Activated naive CD4-positive, alpha-beta T cell treated with anti-CD3 and anti-CD28 coated beads for 36 hours (primary cell): ENCODE measurements at regions of chr12 and their contacts with region 1.

Region 1: DNA sequence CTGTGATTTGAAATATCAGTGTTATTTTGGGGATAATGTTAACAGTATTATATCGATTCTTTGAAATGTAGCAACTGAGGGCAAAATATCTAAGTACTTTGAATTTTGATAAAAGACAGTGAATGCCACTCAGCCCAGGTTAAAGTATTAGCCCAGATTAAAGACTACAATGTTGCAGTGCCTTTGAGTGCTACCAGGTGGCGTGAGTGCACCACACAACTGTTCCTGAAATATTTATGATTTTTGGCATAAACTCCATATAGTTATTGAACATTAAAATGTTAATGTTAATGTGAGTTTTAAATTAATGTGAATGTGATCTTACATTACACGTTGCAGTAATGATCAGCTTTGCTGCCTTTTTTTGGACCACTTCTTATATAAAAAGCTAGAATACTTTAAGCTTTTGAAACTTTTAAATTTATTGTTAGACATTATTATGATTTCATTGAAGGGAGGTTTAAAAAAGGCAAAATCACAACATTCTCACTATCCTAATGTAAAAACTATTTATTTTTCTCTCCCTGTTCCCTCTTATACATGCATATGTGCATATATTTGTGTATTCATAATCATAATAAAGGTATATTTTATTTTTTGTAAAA is 22.5 kb downstream of the MRPS35 start:
- DNase-seq: peak; percentile 60
- H3K4me3 Mint-ChIP-seq: no peak overlapping the region
- H3K27ac Mint-ChIP-seq: no peak overlapping the region
- H3K4me1 Mint-ChIP-seq: no peaks in the 10 kb centered on the region
- H3K27me3 Mint-ChIP-seq: no peaks in the 10 kb centered on the region

Region 2: DNA sequence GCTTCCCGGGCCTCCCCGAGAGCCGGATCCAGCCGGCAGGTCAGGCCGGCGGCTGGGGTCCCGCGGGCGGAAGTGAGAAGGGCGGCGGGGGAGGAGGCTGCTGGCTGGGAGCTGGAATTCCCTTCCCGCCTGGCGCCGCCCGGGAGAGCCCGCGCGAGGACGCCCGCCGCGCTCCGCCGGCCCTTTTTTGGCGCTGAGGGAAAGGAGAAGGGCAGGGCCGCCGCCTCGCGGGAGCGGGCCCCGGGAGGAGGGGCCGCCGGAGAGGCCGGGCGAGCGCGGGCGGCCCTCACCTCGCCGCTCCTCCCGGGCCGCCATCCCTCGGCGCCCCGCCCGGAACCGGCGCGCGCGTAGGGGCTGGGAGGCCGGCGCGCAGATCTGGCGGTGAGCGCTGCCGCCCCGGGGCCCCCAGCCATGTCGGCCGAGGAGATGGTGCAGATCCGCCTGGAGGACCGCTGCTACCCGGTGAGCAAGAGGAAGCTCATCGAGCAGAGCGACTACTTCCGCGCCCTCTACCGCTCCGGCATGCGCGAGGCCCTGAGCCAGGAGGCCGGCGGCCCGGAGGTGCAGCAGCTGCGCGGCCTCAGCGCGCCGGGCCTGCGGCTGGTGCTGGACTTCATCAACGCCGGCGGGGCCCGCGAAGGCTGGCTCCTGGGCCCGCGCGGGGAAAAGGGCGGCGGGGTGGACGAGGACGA is 46.9 kb after region 1 on chr12 and contains the starts of genes KLHL42 and MANSC4:
- CTCF ChIA-PET with region 1: interaction called, 4 read pairs
- intact Hi-C with region 1: loop called (anchors 2 kb)
- DNase-seq: peak; percentile 71
- H3K4me3 Mint-ChIP-seq: peak within 1 kb of the TSS; percentile 82
- H3K27ac Mint-ChIP-seq: peak within 1 kb of the TSS; percentile 80
- H3K4me1 Mint-ChIP-seq: peaks cover 27% of the 10 kb centered on the region
- H3K27me3 Mint-ChIP-seq: no peaks in the 10 kb centered on the region
- total RNA-seq, gene KLHL42: 9.4 to 9.8 TPM
- total RNA-seq, gene MANSC4: not detected

Region 3: DNA sequence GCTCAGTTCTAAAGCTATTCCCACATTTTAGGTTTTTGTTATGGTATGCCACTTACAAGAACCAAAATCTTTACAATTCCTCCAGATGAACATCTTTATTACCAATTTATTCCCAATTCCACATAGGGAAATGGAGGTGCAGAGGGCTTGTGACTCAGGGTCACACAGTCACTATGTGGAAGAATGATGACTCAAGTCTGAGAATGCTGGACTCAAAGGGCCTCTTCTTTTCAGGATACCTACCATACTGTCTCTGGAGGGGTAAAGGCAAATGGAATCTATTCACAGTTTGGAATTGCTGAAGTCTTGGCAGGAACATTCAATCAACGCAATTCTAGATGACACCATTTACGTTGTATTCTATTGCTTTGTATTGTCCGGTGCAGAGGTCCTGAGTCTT is 95.0 kb after region 1 on chr12:
- CTCF ChIA-PET with region 1: no interaction called
- intact Hi-C with region 1: no loop called
- DNase-seq: no peak
- H3K4me3 Mint-ChIP-seq: no peak overlapping the region
- H3K27ac Mint-ChIP-seq: no peak overlapping the region
- H3K4me1 Mint-ChIP-seq: peaks cover 17% of the 10 kb centered on the region
- H3K27me3 Mint-ChIP-seq: peaks cover 35% of the 10 kb centered on the region

Region 4: DNA sequence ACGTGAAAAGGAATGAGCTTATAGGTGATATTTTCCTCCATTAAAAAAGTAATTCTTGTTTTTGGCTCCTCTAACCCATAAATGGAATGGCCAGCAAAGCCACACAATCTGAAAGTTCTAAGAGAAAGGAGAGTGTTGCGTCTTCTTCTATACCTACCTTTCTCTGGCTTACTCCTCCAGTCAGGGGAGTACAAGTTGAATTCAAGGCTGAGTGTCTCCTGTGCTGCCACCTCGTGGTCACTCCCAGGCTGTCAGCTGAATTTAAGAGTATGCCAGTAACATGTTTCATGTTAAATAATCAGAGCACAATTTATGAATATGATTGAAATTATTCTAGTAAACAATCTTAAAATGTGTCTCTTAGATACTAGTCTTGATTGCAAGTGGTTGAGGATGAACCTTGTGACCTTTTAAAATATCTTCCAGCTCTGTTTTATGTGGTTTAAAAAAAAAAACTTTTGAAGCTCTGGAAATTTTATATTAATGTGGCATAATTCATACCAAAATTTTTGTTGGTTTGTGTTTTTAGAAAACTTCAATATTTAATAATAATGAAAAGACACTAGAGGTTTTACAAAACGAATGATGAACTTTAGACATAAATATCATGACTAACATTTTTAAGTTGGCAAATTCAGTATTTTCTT is 207.7 kb after region 1 on chr12:
- CTCF ChIA-PET with region 1: interaction called, 37 read pairs
- intact Hi-C with region 1: loop called (anchors 1 kb)
- DNase-seq: peak; percentile 91
- H3K4me3 Mint-ChIP-seq: no peak overlapping the region
- H3K27ac Mint-ChIP-seq: no peak overlapping the region
- H3K4me1 Mint-ChIP-seq: no peaks in the 10 kb centered on the region
- H3K27me3 Mint-ChIP-seq: peaks cover 3% of the 10 kb centered on the region

Region 5: GRCh38 chr12:28872654-28873268 is 1139.6 kb after region 1 on chr12:
- CTCF ChIA-PET with region 1: interaction called, 3 read pairs
- intact Hi-C with region 1: loop called (anchors 10 kb)
- DNase-seq: peak; percentile 48
- H3K4me3 Mint-ChIP-seq: no peak overlapping the region
- H3K27ac Mint-ChIP-seq: no peak overlapping the region
- H3K4me1 Mint-ChIP-seq: no peaks in the 10 kb centered on the region
- H3K27me3 Mint-ChIP-seq: no peaks in the 10 kb centered on the region

Region 6: DNA sequence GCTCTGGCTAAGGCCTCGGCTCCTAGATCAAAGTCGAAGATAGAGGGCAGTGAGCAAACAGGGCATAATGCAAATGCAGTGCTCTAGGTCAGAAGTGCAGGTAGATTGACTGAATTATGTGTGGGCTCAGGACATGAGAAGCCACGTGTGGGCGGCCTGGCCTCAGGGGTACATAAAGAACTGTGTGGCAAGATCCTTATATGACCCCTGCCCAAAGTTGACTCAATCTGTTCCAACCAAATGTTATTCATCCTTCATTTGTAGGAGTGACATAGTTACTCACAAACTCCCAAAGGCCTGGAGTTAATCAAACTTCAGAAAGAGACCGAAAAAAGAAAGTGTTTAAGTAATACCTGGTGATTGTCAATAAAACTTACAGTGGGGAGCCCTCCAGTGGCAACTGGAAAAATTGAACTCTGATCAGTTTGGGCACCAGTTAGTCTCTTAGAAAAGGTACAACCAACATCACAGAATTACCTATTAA is 1265.5 kb after region 1 on chr12:
- CTCF ChIA-PET with region 1: no interaction called
- intact Hi-C with region 1: loop called (anchors 2 kb)
- DNase-seq: peak; percentile 40
- H3K4me3 Mint-ChIP-seq: no peak overlapping the region
- H3K27ac Mint-ChIP-seq: no peak overlapping the region
- H3K4me1 Mint-ChIP-seq: no peaks in the 10 kb centered on the region
- H3K27me3 Mint-ChIP-seq: peaks cover 6% of the 10 kb centered on the region